H1 (cell line): ENCODE measurements at regions of chr9 and their contacts with region 1.

Region 1: DNA sequence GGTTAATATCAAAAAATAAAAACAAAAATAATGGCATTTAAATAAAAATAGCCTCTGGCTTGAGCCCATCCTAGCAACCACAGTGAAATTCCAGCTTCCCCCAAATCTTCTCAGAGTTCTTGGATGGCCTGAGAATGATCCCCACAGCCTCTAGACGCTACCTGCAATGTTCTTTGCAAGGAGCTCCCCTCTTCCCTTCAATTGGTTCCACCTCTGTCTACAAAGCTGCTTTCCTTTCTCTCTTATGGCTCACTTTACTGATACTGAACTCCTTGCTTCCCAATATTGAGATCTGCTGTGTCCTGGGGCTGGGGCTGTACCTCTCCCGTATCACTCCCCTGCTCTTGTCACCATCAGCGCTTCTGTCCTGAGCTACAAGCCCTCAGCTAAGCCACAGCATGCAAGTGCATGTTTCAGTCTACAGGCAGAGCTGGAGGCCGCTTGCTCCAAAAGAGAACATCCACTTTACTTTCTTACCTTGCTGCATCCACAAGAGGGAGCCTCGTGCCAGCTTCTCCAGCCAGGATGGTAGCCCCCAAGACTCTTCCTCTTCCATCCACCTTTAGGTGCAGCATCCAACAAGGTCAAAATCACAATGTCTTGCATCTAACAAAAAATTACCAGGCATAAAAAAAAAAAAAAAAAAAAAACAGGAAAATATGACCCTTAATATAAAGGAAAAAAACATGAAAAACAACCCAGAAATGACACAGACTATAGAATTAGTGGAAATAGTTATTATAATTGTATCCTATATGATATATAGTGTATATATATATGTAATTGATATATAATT is 57.4 kb upstream of the PRSS3 start:
- DNase-seq: peak in 1 of 2 experiments; percentile 65
- H3K4me3 ChIP-seq: no peak overlapping the region
- H3K27ac ChIP-seq: no peak overlapping the region
- H3K4me1 ChIP-seq: no peaks in the 10 kb centered on the region
- H3K27me3 ChIP-seq: no peaks in the 10 kb centered on the region
- CTCF ChIP-seq: peak; percentile 57 to 96 (median 83)
- EP300 ChIP-seq: no peak
- POLR2A ChIP-seq: no peak
- RAD21 ChIP-seq: peak; percentile 82 to 86

Region 2: DNA sequence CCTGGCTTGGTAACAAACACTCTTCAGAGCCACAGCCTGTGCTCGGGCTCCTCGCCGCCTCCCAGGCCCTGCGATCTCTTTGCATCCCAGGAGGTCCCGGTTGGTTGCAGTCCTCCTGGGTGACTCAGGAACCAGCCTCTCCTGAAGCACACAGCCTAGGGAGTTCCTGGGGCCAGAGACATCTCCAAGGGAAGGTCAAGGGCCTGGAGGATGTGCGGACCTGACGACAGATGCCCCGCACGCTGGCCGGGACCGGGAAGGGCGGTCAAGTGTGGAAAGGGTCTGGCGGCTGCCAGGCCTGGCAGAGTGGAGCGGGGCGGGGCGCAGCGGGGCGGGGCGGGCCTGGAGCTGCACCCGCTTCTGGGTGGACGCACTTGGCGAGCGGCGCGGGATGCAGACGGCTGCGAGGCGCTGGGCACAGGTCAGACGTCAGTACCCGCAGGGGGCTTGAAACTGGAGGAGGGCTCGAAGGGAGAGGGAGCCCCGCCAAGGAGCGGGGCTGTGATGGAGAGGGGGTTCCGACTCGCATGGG is 12.4 kb after region 1 on chr9:
- CTCF ChIA-PET with region 1: interaction called, 30 read pairs
- POLR2A ChIA-PET with region 1: no interaction called
- DNase-seq: no peak
- H3K4me3 ChIP-seq: no peak overlapping the region
- H3K27ac ChIP-seq: no peak overlapping the region
- H3K4me1 ChIP-seq: no peaks in the 10 kb centered on the region
- H3K27me3 ChIP-seq: no peaks in the 10 kb centered on the region; a peak in 1 of 7 replicates
- CTCF ChIP-seq: no peak
- EP300 ChIP-seq: no peak
- POLR2A ChIP-seq: no peak
- RAD21 ChIP-seq: no peak